Activated CD8-positive, alpha-beta memory T cell treated with anti-CD3 and anti-CD28 coated beads, Interleukin-2, amount 10 ng/mL, durations not matched to agents 7 days and 5 days (primary cell): ENCODE measurements at regions of chr10 and their contacts with region 1.

Region 1: GRCh38 chr10:124741281-124741921 is 2.8 kb downstream of the FAM53B start:
- DNase-seq: peak; percentile 84
- ATAC-seq: peak; percentile 62
- H3K4me3 Mint-ChIP-seq: peak overlapping the region; percentile 80
- H3K27ac Mint-ChIP-seq: peak overlapping the region; percentile 87
- H3K4me1 Mint-ChIP-seq: peaks cover 74% of the 10 kb centered on the region
- H3K27me3 Mint-ChIP-seq: peaks cover 2% of the 10 kb centered on the region

Region 2: DNA sequence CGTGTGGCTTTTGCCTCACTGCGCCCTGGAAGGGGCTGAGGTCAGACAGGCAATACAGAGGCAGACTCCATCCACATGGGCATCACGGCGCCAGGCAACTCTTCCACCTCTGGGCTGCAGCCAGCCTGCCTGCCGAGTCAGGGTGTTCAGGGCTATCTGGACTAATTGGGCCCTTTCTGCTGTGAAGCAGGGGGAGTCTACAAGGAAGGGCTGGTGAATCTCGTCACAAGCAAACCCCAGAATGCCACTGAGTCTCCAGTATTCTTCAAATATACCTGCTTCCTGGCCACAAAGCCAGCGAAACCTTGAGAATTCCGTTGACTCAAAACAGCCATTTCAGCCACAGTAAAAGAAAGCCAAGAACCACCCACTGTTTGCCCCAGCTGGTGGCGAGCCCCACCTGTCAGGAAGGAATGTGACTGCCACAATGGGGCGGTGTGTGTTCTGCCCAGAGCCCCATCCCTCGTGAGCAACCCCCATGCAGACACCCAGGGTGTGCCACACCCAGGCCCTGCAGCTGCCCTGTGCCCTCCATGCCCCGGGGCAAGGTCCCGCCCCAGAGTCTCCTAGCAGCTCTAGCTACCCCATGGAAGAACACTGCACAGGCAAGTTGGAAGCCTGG is 114.5 kb before region 1 on chr10:
- CTCF ChIA-PET with region 1: interaction called, 29 read pairs
- DNase-seq: peak; percentile 71
- ATAC-seq: peak; percentile 67
- H3K4me3 Mint-ChIP-seq: no peak overlapping the region
- H3K27ac Mint-ChIP-seq: peak overlapping the region; percentile 72
- H3K4me1 Mint-ChIP-seq: peaks cover 35% of the 10 kb centered on the region
- H3K27me3 Mint-ChIP-seq: no peaks in the 10 kb centered on the region

Region 3: GRCh38 chr10:124657806-124658205 is 83.6 kb before region 1 on chr10:
- CTCF ChIA-PET with region 1: interaction called, 24 read pairs
- DNase-seq: peak; percentile 63
- ATAC-seq: peak; percentile 40
- H3K4me3 Mint-ChIP-seq: peak overlapping the region; percentile 10
- H3K27ac Mint-ChIP-seq: peak overlapping the region; percentile 72
- H3K4me1 Mint-ChIP-seq: peaks cover 62% of the 10 kb centered on the region
- H3K27me3 Mint-ChIP-seq: no peaks in the 10 kb centered on the region

Region 4: DNA sequence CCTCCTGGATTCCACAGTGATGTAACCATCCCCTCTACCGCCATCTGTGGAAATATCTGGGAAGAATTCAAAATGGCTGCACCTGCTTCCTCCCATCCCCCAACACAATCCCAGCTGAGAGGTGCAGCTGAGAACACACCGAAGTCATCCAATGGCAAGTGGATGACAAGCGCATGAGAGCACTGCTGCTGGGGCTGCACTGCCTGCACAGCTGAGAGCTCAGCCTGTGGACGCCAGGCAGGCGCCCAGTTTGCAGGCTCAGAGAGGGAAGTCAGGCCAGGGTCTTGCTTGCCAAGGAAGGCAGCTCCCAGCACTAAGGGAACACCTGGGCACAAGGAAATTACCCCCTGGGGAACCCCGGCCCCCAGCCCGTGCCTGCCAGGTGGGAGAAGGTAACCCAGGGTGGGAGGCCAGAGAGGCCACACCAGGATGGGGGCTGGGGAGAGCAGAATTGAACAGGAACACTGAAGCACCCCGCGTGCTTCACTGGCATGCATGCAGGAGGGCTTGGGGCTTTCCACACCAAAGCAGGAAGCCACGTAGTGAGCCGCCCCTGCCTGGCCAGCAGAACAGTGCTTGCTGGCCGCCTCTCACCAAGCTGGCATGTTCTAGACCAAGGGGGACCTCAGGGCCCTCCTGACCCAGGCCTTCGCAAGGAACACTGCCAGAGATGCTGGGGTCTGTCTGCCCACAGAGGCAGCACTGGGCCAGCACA is 43.4 kb before region 1 on chr10:
- CTCF ChIA-PET with region 1: interaction called, 20 read pairs
- DNase-seq: peak; percentile 71
- ATAC-seq: peak; percentile 31
- H3K4me3 Mint-ChIP-seq: no peak overlapping the region
- H3K27ac Mint-ChIP-seq: peak overlapping the region; percentile 98
- H3K4me1 Mint-ChIP-seq: peaks cover 98% of the 10 kb centered on the region
- H3K27me3 Mint-ChIP-seq: no peaks in the 10 kb centered on the region

Region 5: GRCh38 chr10:124719213-124719851 is 22.1 kb before region 1 on chr10:
- CTCF ChIA-PET with region 1: interaction called, 92 read pairs
- DNase-seq: peak; percentile 87
- ATAC-seq: peak; percentile 61
- H3K4me3 Mint-ChIP-seq: peak overlapping the region; percentile 60
- H3K27ac Mint-ChIP-seq: peak overlapping the region; percentile 91
- H3K4me1 Mint-ChIP-seq: peaks cover 92% of the 10 kb centered on the region
- H3K27me3 Mint-ChIP-seq: no peaks in the 10 kb centered on the region